T-cell (primary cell): ENCODE measurements at regions of chr12 and their contacts with region 1.

Region 1: GRCh38 chr12:1517007-1517406 is 77.4 kb downstream of the FBXL14 start:
- DNase-seq: no peak
- ATAC-seq: no peak
- H3K4me3 ChIP-seq: no peak overlapping the region
- H3K4me3 Mint-ChIP-seq: no peak overlapping the region
- H3K27ac ChIP-seq: no peak overlapping the region
- H3K27ac Mint-ChIP-seq: no peak overlapping the region
- H3K4me1 ChIP-seq: no peaks in the 10 kb centered on the region
- H3K4me1 Mint-ChIP-seq: no peaks in the 10 kb centered on the region
- H3K27me3 ChIP-seq: peaks cover 0 to 27% of the 10 kb centered on the region in 2 experiments
- H3K27me3 Mint-ChIP-seq: peaks cover 14 to 15% of the 10 kb centered on the region in 2 donors

Region 2: DNA sequence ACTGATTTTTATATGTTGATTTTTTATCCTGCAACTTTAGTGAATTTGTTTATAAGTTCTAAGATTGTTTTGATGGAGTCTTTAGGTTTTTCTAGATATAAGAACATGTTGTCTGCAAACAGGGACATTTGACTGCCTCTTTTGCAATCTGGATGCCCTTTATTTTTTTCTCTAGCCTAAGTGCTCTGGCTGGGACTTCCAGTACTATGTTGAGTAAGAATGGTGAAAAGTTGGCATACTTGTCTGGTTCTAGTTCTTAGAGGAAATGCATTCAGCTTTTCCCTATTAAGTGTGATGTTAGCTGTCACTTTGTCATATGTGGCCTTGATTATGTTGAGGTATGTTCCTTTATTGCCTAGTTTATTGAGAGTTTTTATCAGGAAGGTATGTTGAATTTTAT is 457.8 kb before region 1 on chr12:
- CTCF ChIA-PET with region 1: no interaction called
- POLR2A ChIA-PET with region 1: interaction called in 1 of 2 experiments, 10 read pairs
- DNase-seq: no peak
- ATAC-seq: no peak
- H3K4me3 ChIP-seq: no peak overlapping the region
- H3K4me3 Mint-ChIP-seq: no peak overlapping the region
- H3K27ac ChIP-seq: no peak overlapping the region
- H3K27ac Mint-ChIP-seq: no peak overlapping the region
- H3K4me1 ChIP-seq: no peaks in the 10 kb centered on the region
- H3K4me1 Mint-ChIP-seq: peaks cover 10 to 16% (median 10%) of the 10 kb centered on the region in 3 donors
- H3K27me3 ChIP-seq: no peaks in the 10 kb centered on the region
- H3K27me3 Mint-ChIP-seq: no peaks in the 10 kb centered on the region

Region 3: DNA sequence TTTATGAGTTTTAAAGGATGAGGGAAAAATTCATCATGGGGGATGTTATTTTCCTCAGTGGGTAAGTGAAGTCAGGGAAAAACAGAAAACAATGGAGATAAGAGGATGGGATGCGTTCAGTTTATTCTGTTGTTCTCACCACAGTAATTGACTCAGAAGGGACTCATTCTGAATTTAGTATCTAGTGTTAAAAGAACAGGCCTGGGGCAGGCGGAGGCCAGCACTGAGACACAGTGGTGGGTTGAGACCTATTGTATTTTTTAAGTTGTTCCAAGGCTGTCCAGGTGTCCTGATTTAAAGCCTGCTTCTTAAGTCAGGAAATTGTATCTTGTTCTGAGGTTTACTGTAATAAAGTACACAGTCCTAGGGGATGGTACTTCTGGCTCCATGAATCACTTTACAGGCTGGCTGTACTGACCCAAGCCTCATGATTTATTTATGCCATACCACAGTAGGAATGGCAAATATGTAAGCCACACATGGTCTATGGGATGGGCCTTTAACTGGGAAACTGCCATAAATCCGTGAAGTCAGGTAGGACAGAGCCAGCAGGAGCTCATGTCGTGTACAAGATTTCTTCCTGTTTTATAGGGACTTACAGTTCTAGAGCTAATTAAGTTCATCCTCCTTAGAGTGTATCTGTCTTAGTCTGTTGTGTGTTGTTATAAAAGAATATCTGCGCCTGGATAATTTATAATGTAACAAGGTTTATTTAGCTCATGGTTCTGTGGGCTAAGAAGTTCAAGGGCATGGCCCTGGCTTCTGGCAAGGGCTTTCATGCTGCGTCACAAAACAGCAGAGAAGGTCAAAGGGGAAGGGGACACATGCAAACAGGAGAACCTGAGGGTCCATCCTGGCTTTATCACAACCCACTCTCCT is 166.7 kb before region 1 on chr12:
- CTCF ChIA-PET with region 1: no interaction called
- POLR2A ChIA-PET with region 1: no interaction called
- DNase-seq: no peak
- ATAC-seq: no peak
- H3K4me3 ChIP-seq: no peak overlapping the region
- H3K4me3 Mint-ChIP-seq: no peak overlapping the region
- H3K27ac ChIP-seq: no peak overlapping the region
- H3K27ac Mint-ChIP-seq: no peak overlapping the region
- H3K4me1 ChIP-seq: no peaks in the 10 kb centered on the region
- H3K4me1 Mint-ChIP-seq: no peaks in the 10 kb centered on the region
- H3K27me3 ChIP-seq: no peaks in the 10 kb centered on the region
- H3K27me3 Mint-ChIP-seq: no peaks in the 10 kb centered on the region